Ovary (tissue), 10 donors: ENCODE measurements at regions of chr5 and their contacts with region 1.

Region 1: DNA sequence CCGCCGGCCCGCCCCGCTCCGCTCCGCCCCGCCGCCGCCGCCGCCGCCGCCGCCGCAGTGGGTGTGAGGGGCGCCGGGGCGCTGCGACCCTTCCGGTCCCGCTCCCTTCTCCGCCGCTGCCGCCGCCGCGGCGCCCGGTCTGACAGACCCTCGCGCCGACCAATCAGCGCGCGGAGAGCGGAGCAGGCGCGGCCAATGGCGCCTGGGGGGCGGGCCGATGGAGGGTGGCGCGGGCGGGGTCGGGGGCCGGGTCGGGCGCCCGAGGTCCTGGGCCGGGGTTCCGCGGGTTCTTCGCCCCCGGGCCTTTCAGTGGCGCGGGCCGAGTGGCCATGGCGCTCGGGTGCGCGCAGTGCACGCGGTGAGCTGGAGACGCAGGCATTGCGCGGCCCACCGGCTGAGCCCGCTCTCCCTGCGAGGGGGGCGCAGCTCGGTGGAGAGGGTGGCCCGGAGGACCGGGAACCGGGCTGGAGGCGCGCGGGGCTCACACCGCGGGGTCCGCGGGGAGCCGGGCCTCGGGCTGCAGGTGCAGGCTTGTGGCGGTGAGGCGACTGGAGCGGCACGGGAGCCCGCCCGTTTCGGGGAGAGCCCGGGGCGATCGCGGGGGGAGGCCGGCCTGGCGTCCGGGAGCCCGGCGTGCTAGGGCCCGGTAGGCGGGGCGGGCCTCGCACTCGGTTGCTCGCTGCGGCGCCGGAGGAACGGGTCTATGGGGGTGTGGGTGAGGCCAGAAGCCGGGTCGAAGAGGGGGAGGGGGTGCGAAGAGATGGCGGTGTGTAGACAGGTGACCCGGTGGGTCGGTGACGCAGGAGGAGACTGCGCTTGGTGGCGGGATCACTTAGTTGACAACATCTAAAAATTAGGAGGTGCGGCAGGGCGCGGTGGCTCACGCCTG is at the start of gene MAPK9:
- DNase-seq: peak; percentile 80 to 88 (median 86)
- H3K4me3 ChIP-seq: peak within 1 kb of the TSS; percentile 62
- H3K27ac ChIP-seq: peak within 1 kb of the TSS; percentile 79 to 90
- H3K4me1 ChIP-seq: no peaks in the 10 kb centered on the region
- H3K27me3 ChIP-seq: no peaks in the 10 kb centered on the region
- CTCF ChIP-seq: no peak
- EP300 ChIP-seq: no peak
- POLR2A ChIP-seq: no peak
- total RNA-seq, gene MAPK9: 25.6 to 35.9 (median 33.4) TPM

Region 2: DNA sequence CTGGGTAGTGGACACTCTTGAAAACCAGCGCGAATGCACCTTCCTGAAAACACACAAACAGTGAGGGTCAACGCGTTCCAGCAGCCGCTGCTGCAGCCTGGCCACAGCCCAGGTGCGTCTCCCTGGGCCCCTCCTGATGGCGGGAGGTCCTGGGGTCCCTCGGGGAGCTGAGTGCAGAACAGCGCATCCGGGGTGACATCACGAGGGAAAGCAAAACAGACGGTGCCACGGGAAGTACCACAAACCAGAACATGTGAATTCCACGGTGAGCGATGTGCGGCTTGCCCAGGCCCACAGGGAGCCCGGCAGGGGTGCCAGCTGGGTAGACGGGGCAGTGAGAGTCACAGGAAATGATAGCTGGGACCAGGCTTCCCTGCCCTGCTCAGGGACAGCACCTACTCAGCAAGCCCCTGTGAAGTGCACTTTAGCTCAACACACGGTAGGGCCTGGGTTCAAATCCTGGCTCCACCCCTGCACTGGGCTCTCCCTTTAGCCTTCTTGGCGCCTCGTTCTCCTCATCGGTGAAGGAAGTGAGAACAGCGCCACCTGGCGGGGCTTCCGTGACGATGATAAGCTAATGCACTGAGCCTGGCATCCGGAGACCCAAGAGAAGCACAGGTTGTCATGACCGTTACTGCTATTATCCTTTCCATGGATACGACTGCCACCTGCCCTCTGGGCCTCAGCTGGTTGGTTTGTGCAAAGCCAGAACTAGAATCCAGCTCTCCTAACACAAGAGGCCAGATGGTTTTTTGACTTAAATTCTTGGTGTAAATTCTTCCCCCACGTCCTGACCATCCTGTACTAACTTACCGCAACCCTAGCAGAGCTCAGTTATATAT is 36.3 kb after region 1 on chr5:
- intact Hi-C with region 1: loop called in 1 of 4 experiments (anchors 5 kb)
- DNase-seq: peak; percentile 56 to 79 (median 71)
- H3K4me3 ChIP-seq: no peak overlapping the region
- H3K27ac ChIP-seq: no peak overlapping the region
- H3K4me1 ChIP-seq: peaks cover 9% of the 10 kb centered on the region
- H3K27me3 ChIP-seq: no peaks in the 10 kb centered on the region
- CTCF ChIP-seq: peak; percentile 21 to 27 (median 25)
- EP300 ChIP-seq: no peak
- POLR2A ChIP-seq: no peak

Region 3: DNA sequence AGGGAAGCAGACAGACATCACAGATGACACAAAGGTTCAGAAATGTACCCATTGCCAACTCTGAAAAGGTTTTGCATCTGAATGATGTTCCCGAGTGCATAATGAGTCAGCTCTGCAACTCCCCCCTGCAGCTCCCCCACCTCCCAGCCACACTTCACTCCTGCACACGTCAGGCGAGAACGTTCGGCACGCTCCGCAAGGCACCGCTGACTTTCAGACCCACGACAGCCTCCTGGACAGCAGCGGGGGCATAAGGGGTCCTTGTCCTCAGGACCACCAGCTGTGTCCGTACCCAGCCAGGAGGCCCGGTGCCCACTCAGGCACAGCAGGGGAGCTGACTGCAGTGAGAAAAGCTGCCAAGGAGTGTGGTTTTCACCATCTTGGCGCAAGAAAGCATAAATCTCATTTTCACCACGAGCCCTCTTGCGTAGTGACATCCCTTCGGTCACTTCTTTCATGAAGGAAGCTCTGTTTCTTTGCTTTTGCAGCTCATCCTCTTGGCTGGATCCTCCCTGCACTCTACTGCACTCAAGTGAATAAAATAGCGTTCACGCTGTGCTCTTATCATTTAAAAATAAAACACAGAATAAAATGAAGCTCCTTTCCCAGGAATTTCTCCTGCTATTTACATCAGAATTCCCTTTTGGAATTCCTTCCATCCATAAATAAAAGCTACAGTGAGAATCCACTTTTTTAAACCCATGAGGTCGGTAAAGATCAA is 51.1 kb after region 1 on chr5:
- intact Hi-C with region 1: no loop called
- DNase-seq: no peak
- H3K4me3 ChIP-seq: no peak overlapping the region
- H3K27ac ChIP-seq: no peak overlapping the region
- H3K4me1 ChIP-seq: peaks cover 8% of the 10 kb centered on the region
- H3K27me3 ChIP-seq: no peaks in the 10 kb centered on the region
- CTCF ChIP-seq: no peak
- EP300 ChIP-seq: no peak
- POLR2A ChIP-seq: no peak

Region 4: GRCh38 chr5:180353048-180353979 is 61.1 kb after region 1 on chr5 and contains the start of gene GFPT2:
- intact Hi-C with region 1: loop called in 2 of 4 experiments (anchors 1 to 10 kb)
- DNase-seq: peak; percentile 91 to 94 (median 93)
- H3K4me3 ChIP-seq: peak within 1 kb of the TSS; percentile 65
- H3K27ac ChIP-seq: peak within 1 kb of the TSS; percentile 72 to 86
- H3K4me1 ChIP-seq: peaks cover 2% of the 10 kb centered on the region
- H3K27me3 ChIP-seq: no peaks in the 10 kb centered on the region
- CTCF ChIP-seq: peak in 1 of 3 donors; percentile 23
- EP300 ChIP-seq: no peak
- POLR2A ChIP-seq: peak; percentile 82
- total RNA-seq, gene GFPT2: 34.0 to 135 (median 42.4) TPM

Region 5: DNA sequence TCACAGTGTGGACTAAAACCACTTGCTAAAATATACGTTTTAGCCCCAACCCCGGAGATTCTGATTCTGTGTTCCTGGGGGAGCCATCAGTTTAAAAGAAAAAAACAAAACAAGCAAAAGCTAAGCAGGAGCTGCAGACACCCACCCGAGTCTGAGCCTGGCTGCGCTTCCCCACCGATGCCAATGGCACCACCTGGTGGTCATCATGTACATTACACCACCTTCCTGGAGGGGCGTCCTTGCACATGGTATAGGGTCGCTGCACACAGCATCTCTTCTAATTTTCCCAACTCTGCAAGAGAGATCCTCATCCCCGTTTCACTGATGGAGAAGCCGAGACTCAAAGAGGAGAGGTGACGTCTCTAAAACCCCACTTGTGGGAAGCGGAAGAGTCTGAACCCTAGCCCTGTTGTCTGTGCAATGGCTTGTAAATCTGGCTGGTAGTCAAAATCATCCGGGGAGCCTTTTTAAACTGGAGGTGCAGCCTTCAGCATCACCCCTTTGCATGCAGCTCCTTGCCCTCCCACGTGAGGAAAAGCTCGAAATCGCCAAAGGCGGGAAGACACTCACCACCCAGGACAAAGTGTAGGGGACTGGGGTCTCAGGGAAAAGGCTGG is 178.9 kb after region 1 on chr5:
- intact Hi-C with region 1: loop called (anchors 2 to 10 kb)
- DNase-seq: peak; percentile 54 to 72 (median 67)
- H3K4me3 ChIP-seq: no peak overlapping the region
- H3K27ac ChIP-seq: no peak overlapping the region
- H3K4me1 ChIP-seq: no peaks in the 10 kb centered on the region
- H3K27me3 ChIP-seq: no peaks in the 10 kb centered on the region
- CTCF ChIP-seq: peak; percentile 79 to 81 (median 81)
- EP300 ChIP-seq: no peak
- POLR2A ChIP-seq: no peak